Endothelial cell of umbilical vein (primary cell): ENCODE measurements at regions of chr17 and their contacts with region 1.

Region 1: DNA sequence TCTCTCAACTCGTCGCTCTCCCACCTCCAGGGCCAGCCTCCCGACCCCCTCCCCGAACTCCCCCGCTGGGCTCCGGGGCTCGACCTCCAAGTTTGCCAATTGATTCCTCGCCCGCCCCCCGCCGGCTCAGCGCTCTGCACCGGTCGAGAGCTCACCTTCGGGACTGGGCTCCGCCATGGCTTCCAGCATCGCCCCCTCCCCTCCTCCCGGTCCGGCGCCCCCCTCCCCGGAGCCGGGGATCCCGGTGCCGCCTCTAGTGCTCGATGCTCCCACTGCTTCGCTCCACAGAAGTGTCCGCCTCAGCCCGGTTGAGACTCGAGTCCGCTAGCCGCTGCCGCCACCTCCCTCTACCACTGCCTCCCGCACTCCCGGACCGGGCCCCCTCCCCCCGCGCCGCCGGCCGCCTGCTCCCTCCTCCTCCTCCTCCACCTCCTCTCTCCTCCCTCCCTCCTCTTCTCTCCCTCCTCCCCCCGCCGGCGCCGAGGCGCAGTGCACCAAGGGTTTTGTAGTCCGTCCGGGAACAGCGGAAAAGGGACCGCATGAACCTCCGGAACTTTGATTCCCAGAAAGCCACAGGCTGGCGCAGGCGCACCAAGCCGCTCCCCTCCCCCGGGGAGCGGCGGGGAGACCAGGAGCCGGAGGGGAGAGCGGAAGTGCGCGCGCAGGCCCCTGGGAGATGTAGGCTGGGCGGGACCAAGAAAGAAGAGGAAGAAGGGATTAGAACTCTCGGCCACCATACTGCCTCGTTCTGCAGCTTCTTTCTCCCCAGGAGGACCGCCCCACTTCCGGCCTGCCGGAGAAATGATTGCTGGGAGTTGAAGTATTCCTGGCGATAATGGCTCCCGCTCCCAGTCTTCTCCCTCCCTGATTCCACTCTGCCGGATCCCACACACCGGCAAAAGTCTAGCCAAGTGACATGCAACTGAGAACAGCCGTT is at the start of gene PHF23:
- DNase-seq: peak; percentile 100
- H3K4me3 ChIP-seq: peak within 1 kb of the TSS; percentile 71 to 96 (median 83)
- H3K27ac ChIP-seq: peak within 1 kb of the TSS; percentile 14
- H3K4me1 ChIP-seq: peaks cover 35% of the 10 kb centered on the region
- H3K27me3 ChIP-seq: no peaks in the 10 kb centered on the region
- CTCF ChIP-seq: no peak
- POLR2A ChIP-seq: peak; percentile 51
- total RNA-seq, gene PHF23: 54.7 and 56.2 TPM in 2 replicates

Region 2: DNA sequence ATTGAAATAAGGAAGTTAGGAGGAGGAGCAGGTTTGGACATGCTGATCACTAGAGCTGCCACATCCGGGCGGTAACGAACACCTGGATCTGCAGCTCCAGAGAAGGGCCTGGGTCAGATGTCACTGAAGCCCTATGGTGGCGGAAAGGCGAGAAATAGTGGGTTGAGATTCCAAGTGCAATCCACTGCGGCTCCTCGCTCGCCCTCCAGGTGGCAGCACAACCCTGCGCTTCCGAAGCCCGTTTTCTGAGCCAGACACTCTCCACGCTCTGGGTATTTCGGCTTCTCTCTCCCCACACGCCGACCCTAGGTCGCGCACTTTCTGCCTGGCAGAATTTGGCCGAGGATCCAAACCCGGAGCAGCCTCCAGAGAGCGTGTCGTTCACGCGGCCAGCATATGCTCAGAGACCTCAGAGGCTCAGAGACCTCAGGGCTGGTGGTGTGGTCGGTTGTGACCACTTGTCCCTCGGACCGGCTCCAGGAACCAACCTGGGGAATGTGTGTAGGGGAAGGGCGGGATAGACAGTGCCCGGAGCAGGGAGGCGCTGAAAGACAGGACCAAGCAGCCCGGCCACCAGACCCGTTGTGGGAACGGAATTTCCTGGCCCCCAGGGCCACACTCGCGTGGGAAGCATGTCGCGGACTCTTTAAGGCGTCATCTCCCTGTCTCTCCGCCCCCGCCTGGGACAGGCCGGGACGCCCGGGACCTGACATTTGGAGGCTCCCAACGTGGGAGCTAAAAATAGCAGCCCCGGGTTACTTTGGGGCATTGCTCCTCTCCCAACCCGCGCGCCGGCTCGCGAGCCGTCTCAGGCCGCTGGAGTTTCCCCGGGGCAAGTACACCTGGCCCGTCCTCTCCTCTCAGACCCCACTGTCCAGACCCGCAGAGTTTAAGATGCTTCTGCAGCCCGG is 41.4 kb after region 1 on chr17:
- CTCF ChIA-PET with region 1: interaction called, 3 read pairs
- POLR2A ChIA-PET with region 1: no interaction called
- dilution Hi-C with region 1: no loop called
- intact Hi-C with region 1: loop called (anchors 2 kb)
- DNase-seq: peak; percentile 77
- H3K4me3 ChIP-seq: peak overlapping the region in 2 of 3 experiments; percentile 13 to 33
- H3K27ac ChIP-seq: no peak overlapping the region
- H3K4me1 ChIP-seq: peaks cover 9% of the 10 kb centered on the region
- H3K27me3 ChIP-seq: peaks cover 4 to 5% of the 10 kb centered on the region in 2 experiments
- CTCF ChIP-seq: peak; percentile 92 to 96
- POLR2A ChIP-seq: no peak

Region 3: DNA sequence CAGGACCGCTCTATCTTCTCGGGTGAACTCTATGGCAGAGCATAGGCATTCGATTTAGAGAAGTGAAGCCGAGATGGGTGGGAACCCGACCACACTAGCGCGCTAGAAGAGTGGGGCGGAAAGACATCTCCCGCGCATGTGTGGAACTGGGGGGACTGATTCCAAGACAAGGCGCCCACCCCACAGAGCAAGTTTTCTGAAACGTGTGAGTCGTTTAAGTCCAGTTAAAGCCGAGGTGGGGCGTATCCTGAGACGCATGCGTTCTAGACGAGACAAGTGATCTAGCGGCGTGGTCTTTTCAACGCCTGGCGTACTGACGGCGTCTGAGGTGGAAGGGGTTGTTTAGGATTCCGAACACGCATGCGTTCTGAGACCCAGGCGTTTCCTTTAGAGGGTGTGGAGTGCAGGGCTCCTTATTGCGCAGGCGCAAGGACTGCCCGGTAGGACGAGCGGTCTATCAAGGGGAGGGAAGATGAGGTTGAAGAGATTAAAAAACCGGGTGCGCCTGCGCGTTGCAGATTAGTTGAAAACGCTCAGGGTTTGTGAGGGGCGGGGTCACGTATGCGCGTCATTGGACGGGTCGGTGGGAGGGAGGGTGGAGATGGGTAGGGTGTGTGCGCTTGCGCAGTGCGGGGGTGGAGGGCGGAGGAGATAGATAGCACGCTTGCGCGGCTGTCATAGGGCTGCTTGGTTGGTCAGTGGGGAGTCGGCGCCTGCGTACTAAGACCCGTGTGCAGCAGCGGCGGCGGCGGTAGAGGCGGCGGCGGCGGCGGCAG is 67.7 kb after region 1 on chr17 and contains the start of gene EIF5A:
- CTCF ChIA-PET with region 1: interaction called, 3 read pairs
- POLR2A ChIA-PET with region 1: no interaction called
- dilution Hi-C with region 1: no loop called
- intact Hi-C with region 1: loop called (anchors 1 kb)
- DNase-seq: peak; percentile 100
- H3K4me3 ChIP-seq: peak within 1 kb of the TSS; percentile 71 to 93 (median 87)
- H3K27ac ChIP-seq: peak within 1 kb of the TSS; percentile 83
- H3K4me1 ChIP-seq: peaks cover 12% of the 10 kb centered on the region
- H3K27me3 ChIP-seq: no peaks in the 10 kb centered on the region
- CTCF ChIP-seq: no peak
- POLR2A ChIP-seq: peak; percentile 83
- total RNA-seq, gene EIF5A: 847 and 859 TPM in 2 replicates

Region 4: DNA sequence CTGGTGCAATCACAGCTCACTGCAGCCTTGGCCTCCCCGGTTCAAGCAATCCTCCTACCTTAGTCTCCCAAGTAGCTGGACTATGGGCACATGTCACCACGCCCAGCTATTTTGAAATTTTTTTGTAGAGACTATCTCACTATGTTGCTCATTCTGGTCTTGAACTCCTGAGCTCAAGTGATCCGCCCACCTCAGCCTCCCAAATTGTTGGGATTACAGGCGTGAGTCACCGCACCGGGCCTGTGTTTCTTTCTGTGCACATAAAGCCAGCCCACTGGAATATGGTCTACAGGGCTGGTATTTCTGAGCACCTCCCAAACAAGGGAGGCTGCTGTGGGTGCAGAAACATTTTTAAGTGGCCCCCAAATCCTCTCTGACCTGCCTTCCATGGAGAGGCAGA is 124.0 kb after region 1 on chr17:
- CTCF ChIA-PET with region 1: no interaction called
- POLR2A ChIA-PET with region 1: no interaction called
- dilution Hi-C with region 1: no loop called
- intact Hi-C with region 1: no loop called
- DNase-seq: no peak
- H3K4me3 ChIP-seq: no peak overlapping the region
- H3K27ac ChIP-seq: no peak overlapping the region
- H3K4me1 ChIP-seq: no peaks in the 10 kb centered on the region
- H3K27me3 ChIP-seq: peaks cover 0 to 3% of the 10 kb centered on the region in 2 experiments
- CTCF ChIP-seq: no peak
- POLR2A ChIP-seq: no peak